ENCODE measurements at regions of chr7 and their contacts with region 1.

Region 1: DNA sequence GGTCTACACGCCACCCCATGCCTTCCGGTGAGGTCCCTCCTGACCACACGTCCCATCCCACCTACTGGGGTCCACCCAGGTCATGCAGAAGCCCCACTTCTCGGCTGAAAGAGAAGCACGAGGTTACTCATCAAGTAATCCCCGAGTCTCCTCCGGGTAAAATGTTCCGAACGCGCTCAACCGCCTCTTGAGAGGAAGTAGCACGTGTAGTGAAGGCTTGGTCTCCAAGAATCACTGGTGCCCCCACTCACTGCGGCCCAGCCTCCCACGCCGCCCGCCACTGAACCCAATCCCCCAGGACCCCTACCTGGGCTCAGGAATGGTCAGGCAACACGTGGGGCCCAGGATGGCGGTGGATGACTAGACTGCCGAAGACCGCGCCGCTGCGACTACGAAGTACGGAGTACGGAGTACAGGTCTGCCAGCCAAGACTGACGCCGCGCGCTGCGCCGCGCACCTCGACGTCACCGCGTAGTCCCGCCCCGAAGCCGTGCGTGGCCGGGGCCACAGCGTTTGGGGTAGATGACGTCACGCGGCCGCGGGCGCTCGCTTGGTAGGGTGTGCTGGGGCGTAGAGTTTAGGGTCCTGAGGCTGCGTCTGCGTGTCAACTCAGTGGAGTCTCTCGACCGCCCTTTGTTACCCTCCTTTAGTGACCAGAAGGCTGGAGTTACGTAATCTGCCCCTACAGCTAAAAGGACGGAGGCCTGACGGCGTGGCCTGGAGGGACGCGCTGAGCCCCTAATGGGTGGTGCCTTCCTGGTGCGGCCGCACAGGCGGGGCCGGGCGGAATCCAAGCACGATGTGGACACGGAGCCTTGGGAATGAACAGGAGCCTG is 7.6 kb upstream of the MYO1G start:
- DNase-seq: peak; percentile 77 to 97 (median 94)

Region 2: GRCh38 chr7:44581879-44582603 is 404.4 kb before region 1 on chr7 and contains the start of gene TMED4:
- intact Hi-C with region 1: loop called (anchors 10 kb)
- DNase-seq: peak; percentile 96 to 100 (median 99)

Region 3: DNA sequence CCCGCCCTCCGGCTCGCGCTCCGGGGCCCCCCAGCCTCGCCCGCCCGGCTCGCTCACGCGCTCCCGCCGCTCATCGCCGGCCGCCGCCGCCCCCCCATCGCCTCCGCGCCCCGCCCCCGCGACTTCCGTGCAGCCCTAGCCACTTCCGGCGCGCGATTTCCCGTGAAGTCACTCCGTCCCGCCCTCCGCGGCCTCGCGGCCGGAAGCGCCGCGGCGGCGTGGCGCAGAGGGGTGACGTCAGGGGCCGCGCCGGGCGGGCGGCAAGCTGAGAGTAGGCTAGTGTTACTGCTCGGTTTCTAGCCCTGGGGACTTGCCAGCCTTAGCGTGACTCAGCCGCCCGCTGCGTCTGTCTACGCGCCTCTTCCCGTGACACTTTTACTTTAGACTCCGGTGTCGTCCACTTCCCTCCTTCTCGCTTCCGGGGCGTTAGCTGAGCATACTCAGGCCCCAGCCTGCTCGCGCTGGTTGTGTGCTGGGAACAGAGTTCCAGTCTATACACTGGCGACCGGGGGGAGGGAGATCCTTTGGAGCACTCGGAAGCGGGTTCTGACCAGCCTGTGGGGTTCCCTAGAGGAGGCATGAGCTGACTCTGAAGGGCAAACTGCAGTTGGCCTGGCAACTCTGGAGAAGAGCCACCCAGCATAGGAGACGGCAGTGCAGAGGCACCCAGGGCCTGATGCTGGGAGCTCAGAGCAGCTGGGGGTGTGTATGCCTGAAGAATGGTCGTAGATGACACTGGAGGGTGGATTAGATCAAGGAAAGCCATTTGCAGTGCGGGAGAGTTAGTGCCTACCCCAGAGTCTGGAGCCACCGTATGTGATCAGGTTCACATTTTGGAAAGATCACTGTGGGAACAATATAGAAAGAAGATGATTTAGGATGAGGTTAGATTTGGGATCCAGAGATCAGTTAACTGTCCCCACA is 100.8 kb before region 1 on chr7 and contains the start of gene PURB:
- intact Hi-C with region 1: loop called (anchors 10 kb)
- DNase-seq: peak; percentile 84 to 99 (median 95)

Measured in head of caudate nucleus (tissue), 42 donors.